ENCODE measurements at regions of chr14 and their contacts with region 1.

Region 1: GRCh38 chr14:24366721-24367513 is 1.1 kb upstream of the NFATC4 start:
- DNase-seq: peak; percentile 89
- ATAC-seq: peak; percentile 68
- H3K4me3 ChIP-seq: peak overlapping the region; percentile 30
- H3K27ac ChIP-seq: peak overlapping the region; percentile 98
- H3K4me1 ChIP-seq: peaks cover 11% of the 10 kb centered on the region
- H3K27me3 ChIP-seq: no peaks in the 10 kb centered on the region
- CTCF ChIP-seq: no peak
- POLR2A ChIP-seq: no peak
- RAD21 ChIP-seq: no peak

Region 2: DNA sequence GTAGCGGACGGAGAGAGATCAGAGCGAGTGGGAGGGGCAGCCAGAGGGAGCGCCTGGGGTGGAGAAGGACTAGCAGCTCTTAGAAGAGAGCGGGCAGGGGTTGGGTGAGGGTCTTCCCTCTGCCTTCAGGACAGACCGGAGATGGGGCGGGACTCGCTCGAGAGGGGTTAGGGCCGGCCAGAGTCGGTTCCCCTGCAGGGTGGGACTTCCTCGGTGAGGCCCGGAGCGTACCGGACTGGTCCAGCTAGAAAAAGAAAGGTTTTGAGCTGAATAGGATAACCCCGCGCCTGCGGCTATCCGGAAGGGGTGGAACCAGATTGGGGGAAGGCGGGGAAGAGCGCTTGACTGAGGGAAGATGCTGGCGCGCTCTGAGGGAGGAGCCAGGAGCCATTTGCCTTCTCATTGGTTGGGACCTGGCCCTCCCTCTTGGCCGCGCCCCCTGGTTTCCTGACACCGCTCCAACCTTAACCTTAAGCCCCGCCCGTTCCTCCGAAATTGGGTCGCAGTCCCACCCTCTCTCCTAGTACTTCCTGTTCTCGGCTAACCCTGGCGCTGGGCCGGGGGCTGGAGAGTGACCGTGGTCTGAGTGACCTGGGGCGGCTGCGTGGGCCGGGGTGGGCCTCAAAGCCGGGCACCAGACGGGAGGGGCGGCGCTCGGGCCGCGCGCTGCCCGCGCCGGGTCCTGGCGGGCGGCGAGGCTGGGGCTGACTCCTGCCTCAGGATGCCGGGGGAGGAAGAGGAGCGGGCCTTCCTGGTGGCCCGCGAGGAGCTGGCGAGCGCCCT is 219.7 kb before region 1 on chr14 and contains the start of gene RNF31:
- CTCF ChIA-PET with region 1: no interaction called
- POLR2A ChIA-PET with region 1: no interaction called
- dilution Hi-C with region 1: no loop called
- in situ Hi-C with region 1: no loop called
- intact Hi-C with region 1: no loop called
- DNase-seq: peak; percentile 98
- ATAC-seq: peak; percentile 91
- H3K4me3 ChIP-seq: peak within 1 kb of the TSS; percentile 86
- H3K27ac ChIP-seq: peak within 1 kb of the TSS; percentile 79
- H3K4me1 ChIP-seq: peaks cover 9% of the 10 kb centered on the region
- H3K27me3 ChIP-seq: no peaks in the 10 kb centered on the region
- CTCF ChIP-seq: no peak
- POLR2A ChIP-seq: no peak
- RAD21 ChIP-seq: no peak
- total RNA-seq, gene RNF31: 26.1 and 37.5 TPM in 2 replicates

Region 3: DNA sequence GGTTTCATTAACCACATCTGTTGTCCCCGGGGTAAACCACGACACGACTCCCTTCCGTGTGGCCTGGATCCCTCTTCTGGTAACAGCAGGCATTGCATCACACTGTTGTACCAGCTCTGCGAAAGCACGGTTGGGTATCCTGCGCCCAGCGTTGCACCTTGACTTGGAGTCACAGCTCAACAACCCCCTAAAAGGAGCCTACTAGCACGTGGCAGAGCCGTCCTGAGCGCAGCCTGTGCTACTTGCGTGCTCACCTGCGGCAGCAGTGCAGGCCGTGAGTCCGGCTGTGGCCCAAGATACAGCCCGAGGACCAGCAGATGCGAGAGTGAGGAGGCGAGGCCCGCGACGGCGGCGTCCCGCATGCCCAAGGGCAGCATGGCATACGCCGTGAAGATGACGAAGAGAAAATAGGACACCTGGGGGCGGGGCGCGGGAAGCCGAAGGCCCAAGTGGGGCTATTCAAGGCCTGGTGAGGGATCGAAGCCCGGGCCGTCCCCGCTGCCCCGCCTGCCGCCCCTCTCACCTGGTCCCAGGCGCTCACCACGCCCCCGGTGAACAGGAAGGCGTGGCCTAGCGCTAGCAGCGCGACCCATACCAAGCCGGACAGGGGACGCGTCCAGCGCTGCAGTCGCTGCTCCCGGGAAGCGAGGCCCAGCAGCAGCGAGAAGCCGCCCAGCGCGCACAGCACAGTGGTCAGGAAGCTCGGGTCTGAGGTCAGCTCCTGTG is 34.5 kb before region 1 on chr14:
- CTCF ChIA-PET with region 1: interaction called, 12 read pairs
- POLR2A ChIA-PET with region 1: interaction called, 4 read pairs
- dilution Hi-C with region 1: no loop called
- in situ Hi-C with region 1: no loop called
- intact Hi-C with region 1: loop called (anchors 1 kb)
- DNase-seq: peak; percentile 52
- ATAC-seq: peak; percentile 79
- H3K4me3 ChIP-seq: no peak overlapping the region
- H3K27ac ChIP-seq: no peak overlapping the region
- H3K4me1 ChIP-seq: peaks cover 3% of the 10 kb centered on the region; the same call in 1 of the 2 replicates
- H3K27me3 ChIP-seq: peaks cover 43% of the 10 kb centered on the region
- CTCF ChIP-seq: peak; percentile 64
- POLR2A ChIP-seq: no peak
- RAD21 ChIP-seq: peak; percentile 52

Region 4: GRCh38 chr14:24351517-24351916 is 15.4 kb before region 1 on chr14:
- CTCF ChIA-PET with region 1: interaction called, 4 read pairs
- POLR2A ChIA-PET with region 1: no interaction called
- dilution Hi-C with region 1: no loop called
- in situ Hi-C with region 1: no loop called
- intact Hi-C with region 1: loop called (anchors 1 kb)
- DNase-seq: peak; percentile 43
- ATAC-seq: peak; percentile 83
- H3K4me3 ChIP-seq: no peak overlapping the region
- H3K27ac ChIP-seq: no peak overlapping the region
- H3K4me1 ChIP-seq: peaks cover 9% of the 10 kb centered on the region
- H3K27me3 ChIP-seq: peaks cover 24% of the 10 kb centered on the region
- CTCF ChIP-seq: no peak
- POLR2A ChIP-seq: no peak
- RAD21 ChIP-seq: no peak

Region 5: GRCh38 chr14:24398653-24399446 is 31.9 kb after region 1 on chr14 and contains the start of gene NYNRIN:
- CTCF ChIA-PET with region 1: interaction called, 3 read pairs
- POLR2A ChIA-PET with region 1: no interaction called
- dilution Hi-C with region 1: no loop called
- in situ Hi-C with region 1: no loop called
- intact Hi-C with region 1: loop called (anchors 2 kb)
- DNase-seq: peak; percentile 12
- ATAC-seq: peak; percentile 84
- H3K4me3 ChIP-seq: peak within 1 kb of the TSS; percentile 67
- H3K27ac ChIP-seq: peak within 1 kb of the TSS; percentile 20; the same call in 1 of the 2 replicates
- H3K4me1 ChIP-seq: peaks cover 17% of the 10 kb centered on the region
- H3K27me3 ChIP-seq: no peaks in the 10 kb centered on the region
- CTCF ChIP-seq: no peak
- POLR2A ChIP-seq: no peak
- RAD21 ChIP-seq: no peak
- total RNA-seq, gene NYNRIN: 1.7 and 2.2 TPM in 2 replicates

Region 6: DNA sequence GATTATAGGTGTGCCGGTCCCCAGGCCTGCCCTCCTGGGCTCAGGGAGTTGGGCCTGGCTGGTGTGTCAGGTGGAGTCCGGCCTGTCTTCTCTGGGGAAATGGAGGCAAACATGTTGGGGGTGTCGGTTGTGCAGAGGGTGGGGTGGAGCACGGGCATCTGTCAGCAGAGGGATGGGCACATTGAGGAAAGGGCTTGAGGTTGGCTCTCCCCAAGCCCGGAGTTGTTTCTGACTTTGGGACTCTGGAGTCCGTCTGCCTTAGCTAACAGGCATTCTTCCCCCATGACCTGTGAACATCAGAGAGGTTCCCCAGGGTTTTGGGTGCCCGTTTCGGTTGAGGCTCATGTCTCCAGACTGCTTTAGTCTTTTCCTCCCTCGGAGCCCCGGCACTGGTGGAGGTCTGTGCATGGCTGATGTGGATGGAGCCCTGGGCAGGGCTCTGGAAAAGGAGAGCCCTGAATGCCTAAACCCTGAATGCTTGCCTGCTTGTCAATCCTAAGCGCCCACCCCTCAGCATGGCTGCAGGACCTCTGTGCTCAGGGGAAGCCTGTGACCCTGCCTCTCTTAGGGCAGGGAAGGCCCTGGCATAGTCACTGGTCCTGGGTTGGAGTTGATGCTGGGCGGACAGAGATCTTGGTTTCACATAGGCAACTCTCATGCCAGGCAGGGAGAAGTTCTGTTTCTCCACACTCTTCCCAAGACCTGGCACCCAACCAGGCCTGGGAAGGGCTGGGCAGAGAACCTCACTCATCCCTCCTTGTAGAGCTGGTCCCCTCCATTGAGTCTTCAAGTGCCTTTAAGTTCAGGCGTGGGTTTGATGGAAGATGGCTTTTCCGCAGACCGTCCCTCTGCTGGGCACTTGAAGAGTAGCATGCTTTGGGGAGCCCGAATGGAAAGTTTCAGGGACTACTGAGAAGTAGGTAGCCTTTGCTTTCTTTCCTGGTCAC is 44.8 kb after region 1 on chr14:
- CTCF ChIA-PET with region 1: interaction called, 5 read pairs
- POLR2A ChIA-PET with region 1: no interaction called
- dilution Hi-C with region 1: no loop called
- in situ Hi-C with region 1: no loop called
- intact Hi-C with region 1: loop called (anchors 1 kb)
- DNase-seq: peak; percentile 59
- ATAC-seq: peak; percentile 93
- H3K4me3 ChIP-seq: no peak overlapping the region
- H3K27ac ChIP-seq: no peak overlapping the region
- H3K4me1 ChIP-seq: no peaks in the 10 kb centered on the region
- H3K27me3 ChIP-seq: no peaks in the 10 kb centered on the region
- CTCF ChIP-seq: peak; percentile 68
- POLR2A ChIP-seq: no peak
- RAD21 ChIP-seq: peak; percentile 69

Measured in IMR-90 (cell line).